ENCODE measurements at regions of chr16 and their contacts with region 1.

Region 1: GRCh38 chr16:67928561-67929364 is 2.9 kb downstream of the CTRL start:
- DNase-seq: peak; percentile 92

Region 2: DNA sequence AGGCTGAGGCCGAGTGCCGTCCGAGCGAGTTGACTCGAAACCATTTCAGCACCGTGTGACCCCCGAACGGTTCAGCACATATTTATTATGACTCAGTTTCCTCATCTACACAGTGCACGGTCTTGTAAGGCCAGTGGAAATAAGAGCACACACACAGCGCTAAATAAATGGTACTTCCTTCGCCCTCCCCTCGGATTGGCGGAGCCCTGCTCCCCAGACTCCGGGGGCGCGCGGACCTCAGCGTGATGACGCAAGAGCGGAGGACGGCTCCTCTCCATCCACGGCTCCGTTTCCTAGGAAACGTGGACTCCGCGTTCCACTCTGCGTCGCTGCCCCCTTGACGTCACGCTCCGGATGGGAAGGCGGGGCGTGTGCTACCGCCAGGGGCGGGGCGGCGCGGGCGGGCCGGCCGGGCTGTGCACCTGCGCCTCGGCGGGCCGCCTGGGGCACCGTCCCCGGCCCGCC is 268.2 kb before region 1 on chr16 and contains the start of gene PARD6A:
- intact Hi-C with region 1: no loop called
- DNase-seq: peak; percentile 99
- total RNA-seq, gene PARD6A: 2.9 to 4.6 TPM

Region 3: DNA sequence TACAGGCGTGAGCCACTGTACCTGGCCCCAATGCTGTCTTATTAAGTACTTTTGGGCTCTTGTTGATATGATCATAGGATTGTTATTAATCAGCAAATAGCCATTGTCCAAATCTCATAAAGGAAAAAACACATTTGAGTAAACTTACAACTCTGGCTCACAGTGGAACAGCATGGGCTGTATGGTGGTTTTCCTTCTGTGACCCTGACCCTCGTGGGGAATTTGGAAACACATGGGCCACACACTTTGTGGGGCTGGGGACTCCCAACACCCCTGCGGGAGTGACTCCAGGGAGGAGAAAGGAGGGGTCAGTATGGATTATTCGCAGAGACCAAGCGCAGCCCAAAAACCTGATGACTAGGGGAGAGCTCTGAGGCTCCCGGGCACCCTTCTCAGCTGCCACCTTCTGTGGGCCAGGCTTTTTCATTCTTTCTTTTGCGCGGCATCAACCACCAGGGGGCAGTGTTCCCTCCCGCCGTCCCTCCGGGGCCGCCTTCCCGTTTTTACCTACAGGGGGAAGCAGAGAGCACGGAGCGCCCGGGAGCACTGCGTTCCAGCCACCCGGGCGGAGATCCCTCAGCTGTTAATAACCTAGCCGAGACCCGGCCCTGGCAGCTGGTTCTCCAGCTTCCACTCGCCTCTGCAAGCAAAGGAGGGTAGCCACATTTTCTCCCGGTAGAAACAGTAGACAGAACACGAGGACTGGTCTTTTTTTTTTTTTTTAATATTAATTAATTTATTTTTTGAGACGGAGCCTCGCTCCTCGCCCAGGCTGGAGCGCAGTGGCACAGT is 112.3 kb before region 1 on chr16:
- intact Hi-C with region 1: loop called in 1 of 2 experiments (anchors 2 kb)
- DNase-seq: peak; percentile 97

Region 4: DNA sequence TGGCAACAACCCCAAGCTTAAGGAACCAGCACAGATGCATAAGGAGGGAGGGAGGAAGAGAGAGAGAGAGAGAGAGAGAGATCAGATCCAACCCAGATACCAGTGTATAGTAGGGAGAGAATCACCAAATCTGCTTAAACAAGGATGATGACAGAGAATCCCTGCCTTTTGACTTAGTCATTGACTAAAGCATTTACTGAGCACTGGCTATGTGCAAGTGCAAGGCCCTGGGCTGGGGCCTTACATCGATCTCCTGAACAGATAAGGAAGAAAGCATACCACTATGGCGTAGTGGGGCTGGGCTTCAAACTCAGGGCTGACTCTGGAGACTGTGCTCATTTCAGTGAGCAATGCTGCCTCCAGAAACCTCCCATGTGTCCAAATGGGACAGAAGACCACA is 106.3 kb before region 1 on chr16:
- intact Hi-C with region 1: loop called (anchors 2 to 5 kb)
- DNase-seq: no peak

Region 5: GRCh38 chr16:67833418-67834241 is 95.1 kb before region 1 on chr16:
- intact Hi-C with region 1: loop called (anchors 5 kb)
- DNase-seq: peak; percentile 98

Region 6: DNA sequence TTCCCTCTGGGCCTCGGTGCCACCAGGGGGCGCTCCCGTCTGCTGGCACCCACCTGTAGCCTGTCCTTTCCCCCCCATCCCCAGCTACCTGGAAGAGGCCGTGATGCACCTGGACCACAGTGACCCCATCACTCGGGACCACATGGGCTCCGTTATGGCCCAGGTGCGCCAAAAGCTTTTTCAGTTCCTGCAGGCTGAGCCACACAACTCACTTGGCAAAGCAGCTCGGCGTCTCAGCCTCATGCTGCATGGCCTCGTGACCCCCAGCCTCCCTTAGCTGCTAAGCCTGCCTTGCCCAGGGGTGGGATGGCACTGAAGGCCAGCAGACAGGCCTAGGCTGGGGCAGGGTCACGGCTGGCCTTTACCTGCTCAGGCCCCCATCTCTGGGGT is 44.9 kb before region 1 on chr16:
- intact Hi-C with region 1: loop called in 1 of 2 experiments (anchors 5 kb)
- DNase-seq: peak; percentile 87

Region 7: DNA sequence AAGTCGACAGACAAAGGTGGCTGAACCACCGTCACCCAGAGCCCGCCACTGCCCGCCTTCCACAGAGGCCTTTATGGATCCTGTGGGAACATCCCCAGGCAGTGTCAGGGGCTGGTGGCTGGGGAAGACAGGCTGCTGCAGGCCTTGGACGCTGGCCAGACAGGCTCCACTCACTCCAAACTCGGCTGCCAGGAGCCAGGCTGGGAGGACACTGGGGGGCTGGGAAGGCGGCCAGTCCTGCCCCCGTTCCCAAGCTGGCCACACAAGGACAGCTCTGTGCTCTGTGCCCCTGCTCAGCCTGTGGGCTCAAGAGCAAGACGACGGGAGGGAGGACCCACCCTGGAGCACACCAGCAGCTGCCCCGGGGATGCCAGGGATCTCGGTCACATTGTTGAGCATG is 22.7 kb after region 1 on chr16:
- intact Hi-C with region 1: no loop called
- DNase-seq: no peak

Measured in posterior vena cava (tissue), 2 donors.